ENCODE measurements at regions of chr4 and their contacts with region 1.

Region 1: GRCh38 chr4:139295206-139295941 is 5.9 kb upstream of the NAA15 start:
- H3K4me3 ChIP-seq: peak overlapping the region; percentile 86
- H3K27ac ChIP-seq: peak overlapping the region; percentile 71
- H3K4me1 ChIP-seq: no peaks in the 10 kb centered on the region
- CTCF ChIP-seq: peak; percentile 97

Region 2: GRCh38 chr4:139279760-139280620 is 15.4 kb before region 1 on chr4 and contains the start of gene MGARP:
- CTCF ChIA-PET with region 1: interaction called, 12 read pairs
- POLR2A ChIA-PET with region 1: interaction called, 16 read pairs
- H3K4me3 ChIP-seq: peak within 1 kb of the TSS; percentile 59
- H3K27ac ChIP-seq: no peak within 1 kb of the TSS; the same call in 1 of the 2 replicates
- H3K4me1 ChIP-seq: no peaks in the 10 kb centered on the region
- CTCF ChIP-seq: peak; percentile 83

Measured in HEK293 (cell line).